ENCODE measurements at regions of chr2 and their contacts with region 1.

Region 1: DNA sequence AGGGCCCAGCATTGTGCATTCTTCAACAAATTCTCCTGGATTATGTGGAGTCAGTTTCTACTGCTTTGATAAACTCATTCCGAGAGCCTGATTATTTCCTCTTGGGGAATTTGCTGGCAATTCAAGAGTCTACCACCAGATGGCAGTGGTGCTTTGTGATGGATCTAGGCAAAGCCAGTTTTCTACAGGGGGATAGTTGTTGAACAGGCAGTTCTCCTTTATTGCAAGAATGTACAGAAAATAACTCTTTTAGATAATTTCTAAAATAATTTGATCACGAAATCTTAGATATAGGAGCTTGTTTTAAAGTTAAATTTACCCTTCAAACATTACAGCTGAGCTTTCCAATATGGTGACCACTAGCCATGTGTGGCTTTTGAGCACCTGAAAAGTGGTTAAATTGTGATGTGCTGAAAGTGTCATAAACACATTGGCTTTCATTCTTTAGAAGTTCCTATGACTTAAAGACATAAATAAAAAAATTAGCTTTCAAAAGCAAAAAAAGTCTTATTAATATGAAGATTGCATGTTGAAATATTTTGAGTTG is 66.7 kb upstream of the HAAO start:
- DNase-seq: peak; percentile 75 to 85
- H3K4me3 ChIP-seq: no peak overlapping the region
- H3K4me3 Mint-ChIP-seq: no peak overlapping the region
- H3K27ac Mint-ChIP-seq: no peak overlapping the region
- H3K4me1 ChIP-seq: peaks cover 12% of the 10 kb centered on the region; the same call in 1 of the 2 replicates
- H3K4me1 Mint-ChIP-seq: peaks cover 14% of the 10 kb centered on the region
- H3K27me3 ChIP-seq: no peaks in the 10 kb centered on the region
- H3K27me3 Mint-ChIP-seq: no peaks in the 10 kb centered on the region
- CTCF ChIP-seq: peak; percentile 89 to 94

Region 2: DNA sequence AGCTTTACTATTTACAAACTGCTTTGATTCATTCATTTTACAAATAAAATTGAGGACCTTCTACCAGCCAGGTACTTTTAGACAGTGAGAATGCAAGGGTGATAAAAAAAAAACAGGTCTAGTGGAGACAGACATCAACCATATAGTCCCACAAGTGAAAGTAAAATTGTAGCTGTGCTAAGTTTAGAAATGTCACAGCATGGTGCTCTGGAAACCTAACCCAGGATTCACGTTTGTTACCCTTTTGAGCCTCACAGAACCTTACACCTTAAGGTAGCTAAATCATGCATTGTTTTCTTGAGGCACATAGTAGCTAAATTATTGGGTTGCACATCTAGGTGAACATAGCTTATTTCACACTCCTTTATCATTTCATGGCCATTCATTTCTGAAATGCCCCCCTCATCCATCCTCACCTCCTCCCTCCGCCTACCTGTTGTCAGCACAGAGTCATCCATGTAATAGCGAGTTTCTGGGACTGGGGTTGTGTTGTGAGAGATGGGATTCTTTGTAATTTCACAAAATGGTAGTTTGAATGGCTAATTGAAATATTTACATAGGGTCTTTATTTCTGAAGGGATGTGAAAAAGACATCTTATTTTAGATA is 283.5 kb before region 1 on chr2:
- CTCF ChIA-PET with region 1: no interaction called
- POLR2A ChIA-PET with region 1: no interaction called
- intact Hi-C with region 1: no loop called
- DNase-seq: no peak
- H3K4me3 ChIP-seq: no peak overlapping the region
- H3K4me3 Mint-ChIP-seq: no peak overlapping the region
- H3K27ac Mint-ChIP-seq: no peak overlapping the region
- H3K4me1 ChIP-seq: no peaks in the 10 kb centered on the region
- H3K4me1 Mint-ChIP-seq: no peaks in the 10 kb centered on the region
- H3K27me3 ChIP-seq: no peaks in the 10 kb centered on the region
- H3K27me3 Mint-ChIP-seq: no peaks in the 10 kb centered on the region
- CTCF ChIP-seq: no peak

Region 3: GRCh38 chr2:42944779-42945415 is 85.8 kb after region 1 on chr2:
- CTCF ChIA-PET with region 1: no interaction called
- POLR2A ChIA-PET with region 1: no interaction called
- intact Hi-C with region 1: loop called (anchors 1 kb)
- DNase-seq: no peak
- H3K4me3 ChIP-seq: no peak overlapping the region
- H3K4me3 Mint-ChIP-seq: no peak overlapping the region
- H3K27ac Mint-ChIP-seq: no peak overlapping the region
- H3K4me1 ChIP-seq: peaks cover 52% of the 10 kb centered on the region
- H3K4me1 Mint-ChIP-seq: peaks cover 36% of the 10 kb centered on the region
- H3K27me3 ChIP-seq: no peaks in the 10 kb centered on the region
- H3K27me3 Mint-ChIP-seq: no peaks in the 10 kb centered on the region
- CTCF ChIP-seq: no peak

Region 4: DNA sequence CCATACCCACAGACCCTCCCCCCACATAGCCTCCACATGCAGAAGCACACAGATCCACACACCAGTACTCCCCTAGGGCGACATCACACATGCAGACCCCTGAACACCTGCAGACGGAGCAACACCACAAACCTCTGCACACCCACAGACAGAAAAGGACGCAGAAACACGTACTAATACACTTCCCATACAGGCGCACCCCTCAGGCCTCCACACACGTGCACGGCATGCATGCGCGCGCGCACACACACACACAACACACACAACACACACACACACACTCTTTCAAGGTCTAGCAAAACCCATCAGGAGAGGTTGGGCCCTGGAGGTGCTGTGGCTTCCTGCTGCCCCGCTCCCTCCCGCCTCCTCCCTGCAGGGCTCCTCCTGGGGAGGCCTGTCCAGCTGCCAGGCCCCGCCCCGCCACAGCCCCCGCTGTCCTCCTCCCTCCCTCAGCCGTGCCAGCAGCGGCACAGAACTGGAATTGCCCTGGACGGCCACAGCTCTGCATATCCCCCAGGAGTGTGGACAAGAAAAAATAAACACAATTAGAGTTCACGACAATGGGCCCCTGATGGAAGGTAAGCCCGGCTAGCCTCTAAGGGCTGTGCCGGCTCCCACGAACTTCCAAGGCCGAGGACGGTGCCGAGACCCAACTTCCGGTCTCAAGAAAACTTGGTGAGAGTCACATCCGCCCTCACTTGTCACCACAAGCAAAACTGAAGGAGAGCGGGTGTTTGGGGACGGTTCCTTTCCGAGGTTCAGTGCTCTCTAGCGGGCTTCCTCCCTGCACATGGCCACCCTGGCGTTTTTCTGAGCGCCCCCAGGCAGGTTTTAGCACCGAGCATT is 360.5 kb after region 1 on chr2:
- CTCF ChIA-PET with region 1: no interaction called
- POLR2A ChIA-PET with region 1: no interaction called
- intact Hi-C with region 1: loop called (anchors 1 kb)
- DNase-seq: peak; percentile 91 to 92
- H3K4me3 ChIP-seq: peak overlapping the region; percentile 98
- H3K4me3 Mint-ChIP-seq: peak overlapping the region; percentile 70
- H3K27ac Mint-ChIP-seq: peak overlapping the region; percentile 76
- H3K4me1 ChIP-seq: peaks cover 40% of the 10 kb centered on the region
- H3K4me1 Mint-ChIP-seq: peaks cover 30% of the 10 kb centered on the region
- H3K27me3 ChIP-seq: no peaks in the 10 kb centered on the region
- H3K27me3 Mint-ChIP-seq: no peaks in the 10 kb centered on the region
- CTCF ChIP-seq: no peak

Region 5: DNA sequence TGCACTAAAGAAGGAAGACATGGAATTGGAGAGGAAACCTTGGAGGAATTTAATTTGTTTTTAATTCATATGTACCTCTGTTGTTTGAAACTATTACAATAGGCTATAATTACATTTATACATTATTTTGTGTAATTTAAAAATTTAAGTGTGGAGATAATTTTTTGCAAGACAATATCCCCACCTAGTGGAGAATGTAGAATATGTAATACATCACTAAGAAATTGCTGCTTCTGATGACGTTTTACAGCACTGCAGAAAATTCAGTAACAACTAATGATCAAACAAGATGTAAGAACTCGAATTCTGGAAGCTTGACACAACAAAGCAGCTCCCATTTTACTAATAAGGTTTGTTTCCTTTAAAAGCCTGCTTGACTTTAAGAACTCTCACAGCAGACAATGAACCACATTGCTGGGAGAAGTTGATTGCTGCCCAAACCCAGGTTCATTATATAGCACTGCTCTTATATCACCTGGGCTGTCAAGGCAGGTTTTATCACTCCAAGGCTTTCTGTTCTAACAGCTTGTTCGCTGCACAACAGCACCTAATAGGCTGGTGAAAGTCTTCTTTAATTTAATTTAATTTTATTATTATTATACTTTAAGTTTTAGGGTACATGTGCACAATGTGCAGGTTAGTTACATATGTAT is 683.3 kb after region 1 on chr2:
- CTCF ChIA-PET with region 1: no interaction called
- POLR2A ChIA-PET with region 1: no interaction called
- intact Hi-C with region 1: loop called (anchors 2 kb)
- DNase-seq: peak in 1 of 2 experiments; percentile 19
- H3K4me3 ChIP-seq: no peak overlapping the region
- H3K4me3 Mint-ChIP-seq: no peak overlapping the region
- H3K27ac Mint-ChIP-seq: no peak overlapping the region
- H3K4me1 ChIP-seq: peaks cover 3% of the 10 kb centered on the region; the same call in 1 of the 2 replicates
- H3K4me1 Mint-ChIP-seq: no peaks in the 10 kb centered on the region
- H3K27me3 ChIP-seq: no peaks in the 10 kb centered on the region
- H3K27me3 Mint-ChIP-seq: no peaks in the 10 kb centered on the region
- CTCF ChIP-seq: peak; percentile 37 to 68